Endothelial cell of umbilical vein (primary cell): ENCODE measurements at regions of chr14 and their contacts with region 1.

Region 1: GRCh38 chr14:49538926-49539325 is 47.3 kb downstream of the RPS29 start:
- DNase-seq: no peak
- H3K4me3 ChIP-seq: no peak overlapping the region
- H3K27ac ChIP-seq: no peak overlapping the region
- H3K4me1 ChIP-seq: no peaks in the 10 kb centered on the region
- H3K27me3 ChIP-seq: peaks cover 0 to 6% of the 10 kb centered on the region in 2 experiments
- CTCF ChIP-seq: no peak
- POLR2A ChIP-seq: no peak

Region 2: GRCh38 chr14:49550286-49551184 is 11.6 kb after region 1 on chr14:
- CTCF ChIA-PET with region 1: interaction called, 13 read pairs
- POLR2A ChIA-PET with region 1: no interaction called
- dilution Hi-C with region 1: no loop called
- intact Hi-C with region 1: no loop called
- DNase-seq: peak; percentile 31
- H3K4me3 ChIP-seq: no peak overlapping the region
- H3K27ac ChIP-seq: no peak overlapping the region
- H3K4me1 ChIP-seq: no peaks in the 10 kb centered on the region
- H3K27me3 ChIP-seq: peaks cover 0 to 2% of the 10 kb centered on the region in 2 experiments
- CTCF ChIP-seq: peak in 1 of 2 donors; percentile 8
- POLR2A ChIP-seq: no peak